ENCODE measurements at regions of chr17 and their contacts with region 1.

Region 1: GRCh38 chr17:54771409-54771808 is 129.2 kb upstream of the TOM1L1 start:
- DNase-seq: no peak
- ATAC-seq: no peak
- H3K4me3 ChIP-seq: no peak overlapping the region
- H3K27ac ChIP-seq: no peak overlapping the region
- H3K4me1 ChIP-seq: no peaks in the 10 kb centered on the region
- H3K27me3 ChIP-seq: no peaks in the 10 kb centered on the region
- CTCF ChIP-seq: no peak

Region 2: DNA sequence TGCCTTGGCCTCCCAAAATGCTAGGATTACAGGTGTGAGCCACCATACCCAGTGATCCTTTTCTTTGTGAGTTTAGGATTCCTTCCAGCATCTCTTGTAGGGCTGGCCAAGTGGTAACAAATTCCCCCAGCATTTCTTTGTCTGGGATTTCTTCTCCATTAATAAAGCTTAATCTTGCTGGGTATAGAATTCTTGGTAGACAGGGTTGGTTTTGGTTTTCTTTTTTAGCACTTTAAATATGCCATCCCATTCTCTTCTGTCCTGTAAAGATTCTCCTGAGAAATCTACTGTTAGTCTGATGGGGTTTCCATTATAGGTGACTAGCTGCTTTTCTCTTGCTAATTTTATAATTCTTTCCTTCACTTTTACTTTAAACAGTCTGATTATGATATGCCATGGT is 43.8 kb before region 1 on chr17:
- intact Hi-C with region 1: loop called in 1 of 10 experiments (anchors 10 kb)
- DNase-seq: no peak
- ATAC-seq: no peak
- H3K4me3 ChIP-seq: no peak overlapping the region
- H3K27ac ChIP-seq: no peak overlapping the region
- H3K4me1 ChIP-seq: no peaks in the 10 kb centered on the region
- H3K27me3 ChIP-seq: no peaks in the 10 kb centered on the region
- CTCF ChIP-seq: no peak

Region 3: DNA sequence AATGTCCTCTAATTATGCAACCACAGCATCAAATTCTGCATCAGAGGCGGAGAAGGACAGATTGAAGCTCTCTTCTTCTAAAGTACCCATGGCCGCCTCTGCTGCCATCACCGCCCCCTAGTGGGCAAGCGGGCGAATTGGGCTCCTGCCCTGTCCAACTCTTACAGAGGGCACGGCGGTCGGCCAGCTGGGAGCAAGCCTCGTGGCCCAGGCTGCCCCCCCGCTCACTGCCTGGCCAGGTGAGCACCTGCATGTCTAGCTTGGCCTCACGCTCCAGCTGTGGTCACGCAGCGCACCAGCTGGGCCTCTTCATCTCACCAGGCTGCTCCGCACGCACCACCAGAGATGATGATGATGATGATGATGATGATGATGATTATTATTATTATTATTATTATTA is 16.8 kb before region 1 on chr17:
- intact Hi-C with region 1: no loop called
- DNase-seq: no peak
- ATAC-seq: no peak
- H3K4me3 ChIP-seq: no peak overlapping the region
- H3K27ac ChIP-seq: no peak overlapping the region
- H3K4me1 ChIP-seq: no peaks in the 10 kb centered on the region
- H3K27me3 ChIP-seq: peaks cover 0 to 6% (median 0%) of the 10 kb centered on the region in 7 donors
- CTCF ChIP-seq: no peak

Measured in heart right ventricle (tissue), 16 donors.